Stomach (tissue), 19 donors: ENCODE measurements at regions of chr10 and their contacts with region 1.

Region 1: GRCh38 chr10:116296291-116296721 is 23.3 kb upstream of the GFRA1 start:
- DNase-seq: peak in 1 of 2 donors; percentile 34
- H3K4me3 ChIP-seq: no peak overlapping the region
- H3K27ac ChIP-seq: no peak overlapping the region
- H3K4me1 ChIP-seq: no peaks in the 10 kb centered on the region
- H3K27me3 ChIP-seq: peaks cover 0 to 5% (median 0%) of the 10 kb centered on the region in 3 donors
- CTCF ChIP-seq: no peak
- EP300 ChIP-seq: no peak
- POLR2A ChIP-seq: no peak

Region 2: DNA sequence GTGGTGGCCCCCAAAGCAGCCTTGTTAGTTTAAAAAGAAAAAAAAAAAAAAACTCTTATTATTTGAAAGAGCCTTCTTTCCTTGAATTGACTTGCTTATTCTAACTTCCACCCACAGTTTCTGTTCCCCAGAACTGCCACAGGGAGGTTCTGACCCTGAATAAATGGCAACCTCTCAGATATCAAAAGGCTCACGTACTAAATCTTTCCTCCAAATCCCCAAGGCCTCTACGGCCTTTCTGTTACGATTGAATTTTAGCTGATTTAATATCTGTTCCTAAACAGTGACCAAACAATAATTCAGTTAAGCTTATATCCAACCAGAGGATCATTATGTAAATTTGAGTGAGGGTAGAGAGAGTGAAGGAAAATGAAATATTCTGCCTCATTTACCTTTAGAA is 506.1 kb before region 1 on chr10:
- intact Hi-C with region 1: loop called (anchors 10 kb)
- DNase-seq: no peak
- H3K4me3 ChIP-seq: no peak overlapping the region
- H3K27ac ChIP-seq: no peak overlapping the region
- H3K4me1 ChIP-seq: no peaks in the 10 kb centered on the region
- H3K27me3 ChIP-seq: no peaks in the 10 kb centered on the region
- CTCF ChIP-seq: no peak
- EP300 ChIP-seq: no peak
- POLR2A ChIP-seq: no peak

Region 3: DNA sequence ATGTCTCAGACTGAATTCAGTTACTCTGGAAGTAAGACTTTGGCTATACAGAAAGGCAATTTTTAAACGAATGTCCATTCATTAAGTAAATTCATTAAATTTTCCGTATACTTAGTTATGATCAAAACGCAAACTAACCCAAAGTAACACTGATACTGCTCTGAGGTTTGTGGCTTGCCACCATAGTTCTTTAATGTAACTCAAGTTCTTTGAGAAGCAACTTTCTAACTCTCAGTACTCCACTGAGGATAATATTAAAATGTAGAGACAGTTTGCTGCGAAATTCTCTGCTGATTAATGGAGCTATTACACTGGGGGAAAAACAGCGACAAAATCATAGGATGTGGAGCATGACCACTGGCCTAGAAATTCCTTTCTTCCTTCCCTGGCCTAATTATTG is 86.0 kb after region 1 on chr10:
- intact Hi-C with region 1: no loop called
- DNase-seq: no peak
- H3K4me3 ChIP-seq: no peak overlapping the region
- H3K27ac ChIP-seq: no peak overlapping the region
- H3K4me1 ChIP-seq: no peaks in the 10 kb centered on the region
- H3K27me3 ChIP-seq: no peaks in the 10 kb centered on the region
- CTCF ChIP-seq: no peak
- EP300 ChIP-seq: no peak
- POLR2A ChIP-seq: no peak

Region 4: DNA sequence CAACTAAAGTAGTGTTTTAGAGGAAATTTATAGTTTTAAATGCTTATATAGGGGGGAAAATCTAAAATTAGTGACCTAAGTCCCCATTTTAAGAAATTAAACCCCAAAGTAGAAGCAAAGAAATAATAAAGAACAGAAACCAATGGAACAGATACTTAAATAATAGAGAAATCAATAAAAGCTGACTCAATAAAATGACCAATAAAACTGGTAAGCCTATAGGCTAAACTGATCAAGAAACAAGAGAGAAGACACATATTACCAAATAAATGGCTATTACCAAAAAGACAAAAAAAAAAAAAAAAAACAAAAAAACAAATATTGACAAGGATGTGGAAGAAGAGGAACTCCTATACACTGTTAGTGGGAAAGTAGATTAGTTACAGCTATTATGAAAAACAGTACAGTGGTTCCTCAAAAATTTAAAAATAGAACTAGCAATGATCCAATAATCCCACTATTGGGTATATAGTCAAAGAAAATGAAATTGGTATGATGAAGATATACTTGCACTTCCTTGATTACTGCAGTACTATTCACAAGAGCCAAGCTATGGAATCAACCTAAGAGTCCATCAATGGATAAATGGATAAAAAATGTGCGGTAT is 997.8 kb after region 1 on chr10:
- intact Hi-C with region 1: no loop called
- DNase-seq: no peak
- H3K4me3 ChIP-seq: no peak overlapping the region
- H3K27ac ChIP-seq: no peak overlapping the region
- H3K4me1 ChIP-seq: peaks cover 0 to 7% (median 0%) of the 10 kb centered on the region in 4 donors
- H3K27me3 ChIP-seq: no peaks in the 10 kb centered on the region
- CTCF ChIP-seq: no peak
- EP300 ChIP-seq: no peak
- POLR2A ChIP-seq: no peak